PC-9 (cell line): ENCODE measurements at regions of chr1 and their contacts with region 1.

Region 1: DNA sequence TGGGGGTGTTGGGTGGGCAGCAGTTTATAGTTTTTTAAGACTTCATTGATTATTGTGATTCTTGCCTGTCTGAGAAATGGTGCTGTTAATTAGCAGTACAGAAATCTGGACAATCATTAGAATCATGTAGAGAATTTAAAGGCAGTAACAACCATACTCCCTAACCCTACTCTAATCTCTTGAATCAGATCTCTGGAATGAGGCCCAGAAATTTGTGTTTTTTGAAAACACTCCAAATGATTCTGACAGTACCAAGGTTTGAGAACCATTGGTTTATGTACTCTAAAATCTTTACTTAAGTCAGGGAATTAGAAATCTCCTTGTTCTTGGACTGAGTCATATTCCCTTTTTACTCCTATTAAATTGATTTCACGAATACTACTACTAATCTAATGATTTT is 24.0 kb downstream of the FNBP1L start:
- DNase-seq: no peak
- H3K4me3 ChIP-seq: no peak overlapping the region
- H3K27ac ChIP-seq: no peak overlapping the region
- H3K4me1 ChIP-seq: no peaks in the 10 kb centered on the region
- H3K27me3 ChIP-seq: no peaks in the 10 kb centered on the region
- CTCF ChIP-seq: no peak

Region 2: GRCh38 chr1:93453911-93454310 is 18.0 kb before region 1 on chr1:
- CTCF ChIA-PET with region 1: interaction called, 10 read pairs
- POLR2A ChIA-PET with region 1: no interaction called
- intact Hi-C with region 1: no loop called
- DNase-seq: no peak
- H3K4me3 ChIP-seq: no peak overlapping the region
- H3K27ac ChIP-seq: peak overlapping the region; percentile 16; the same call in 1 of the 2 replicates
- H3K4me1 ChIP-seq: peaks cover 38% of the 10 kb centered on the region
- H3K27me3 ChIP-seq: no peaks in the 10 kb centered on the region
- CTCF ChIP-seq: no peak

Region 3: DNA sequence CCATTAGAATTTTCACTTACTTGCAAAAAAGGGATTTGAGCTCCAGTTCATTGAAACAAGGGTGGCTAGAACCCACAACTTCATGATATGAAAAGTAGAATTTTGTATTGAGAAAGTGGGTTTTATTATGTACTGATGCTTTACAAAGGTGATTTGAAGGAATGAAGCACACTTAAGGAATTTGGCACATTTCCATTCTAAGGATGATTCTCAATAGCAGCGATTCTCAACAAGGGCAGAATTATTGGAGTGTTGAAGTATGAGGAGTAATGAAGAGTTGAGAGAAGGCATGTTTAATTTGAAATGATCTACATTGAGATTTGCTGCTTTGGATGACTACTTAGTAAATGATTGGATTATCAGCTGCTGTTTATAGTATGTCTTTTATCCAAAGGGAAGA is 30.6 kb after region 1 on chr1:
- CTCF ChIA-PET with region 1: no interaction called
- POLR2A ChIA-PET with region 1: interaction called, 23 read pairs
- intact Hi-C with region 1: no loop called
- DNase-seq: no peak
- H3K4me3 ChIP-seq: no peak overlapping the region
- H3K27ac ChIP-seq: no peak overlapping the region
- H3K4me1 ChIP-seq: no peaks in the 10 kb centered on the region
- H3K27me3 ChIP-seq: no peaks in the 10 kb centered on the region
- CTCF ChIP-seq: no peak